Endothelial cell of umbilical vein (primary cell): ENCODE measurements at regions of chr9 and their contacts with region 1.

Region 1: DNA sequence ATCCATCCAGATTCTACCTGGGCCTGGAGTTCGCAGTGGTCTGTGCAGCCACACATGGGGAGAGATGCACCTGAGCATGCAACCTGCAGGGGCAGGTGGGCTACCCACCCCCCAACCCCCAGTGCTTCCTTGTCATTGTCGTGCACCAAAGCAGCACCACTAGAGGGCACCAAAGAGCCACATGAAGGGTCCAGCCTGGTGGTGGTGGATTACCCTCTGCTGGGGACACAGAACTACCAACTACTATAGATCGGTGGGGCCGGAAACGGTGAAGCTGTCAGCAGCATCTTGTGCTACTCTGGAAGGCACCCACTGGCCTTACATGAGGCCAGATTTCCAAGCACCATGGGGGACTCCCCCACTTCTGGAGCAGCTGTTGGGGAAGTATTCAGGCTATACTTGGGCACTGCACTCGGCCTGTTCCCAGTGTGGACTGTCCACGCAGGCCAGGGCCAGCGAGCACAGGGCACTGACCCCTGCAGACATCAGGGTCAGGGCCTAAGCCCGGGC is 60.2 kb upstream of the TBC1D2 start:
- DNase-seq: peak; percentile 82
- H3K4me3 ChIP-seq: no peak overlapping the region
- H3K27ac ChIP-seq: no peak overlapping the region
- H3K4me1 ChIP-seq: peaks cover 16% of the 10 kb centered on the region
- H3K27me3 ChIP-seq: no peaks in the 10 kb centered on the region
- CTCF ChIP-seq: peak; percentile 91 to 93
- POLR2A ChIP-seq: no peak

Region 2: DNA sequence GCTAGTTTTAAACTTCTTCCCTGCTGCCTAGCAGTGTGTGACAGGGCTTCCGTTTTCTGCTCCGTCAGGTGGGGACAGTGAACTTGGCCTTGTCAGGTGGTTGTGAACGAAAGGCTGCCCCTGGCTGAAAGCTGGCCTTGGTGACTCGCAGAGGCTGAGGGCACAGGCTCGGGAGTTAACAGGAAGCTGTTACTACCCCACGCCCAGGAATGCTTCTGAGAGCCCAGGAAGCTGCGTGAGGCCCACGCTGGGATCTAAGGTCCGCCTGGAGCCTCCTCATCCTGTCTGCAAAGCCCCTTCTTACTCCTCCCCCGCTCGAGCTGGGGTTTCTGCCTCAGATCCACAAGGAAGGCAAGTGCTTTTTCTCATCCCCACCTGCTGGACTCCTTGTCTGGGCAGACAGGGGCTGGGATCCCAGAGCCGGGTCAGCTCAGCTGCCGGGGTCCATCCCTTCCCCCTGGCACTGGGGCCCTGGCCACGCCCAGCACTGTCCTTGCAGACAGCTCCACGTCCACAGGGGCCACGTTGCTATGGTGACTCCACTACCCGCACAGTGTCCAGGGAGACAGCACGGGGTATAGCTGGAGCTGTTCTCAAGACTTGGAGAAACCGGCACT is 64.6 kb after region 1 on chr9:
- CTCF ChIA-PET with region 1: interaction called, 10 read pairs
- POLR2A ChIA-PET with region 1: no interaction called
- dilution Hi-C with region 1: no loop called
- intact Hi-C with region 1: no loop called
- DNase-seq: peak; percentile 8
- H3K4me3 ChIP-seq: no peak overlapping the region
- H3K27ac ChIP-seq: no peak overlapping the region
- H3K4me1 ChIP-seq: peaks cover 10% of the 10 kb centered on the region
- H3K27me3 ChIP-seq: no peaks in the 10 kb centered on the region
- CTCF ChIP-seq: no peak
- POLR2A ChIP-seq: no peak

Region 3: DNA sequence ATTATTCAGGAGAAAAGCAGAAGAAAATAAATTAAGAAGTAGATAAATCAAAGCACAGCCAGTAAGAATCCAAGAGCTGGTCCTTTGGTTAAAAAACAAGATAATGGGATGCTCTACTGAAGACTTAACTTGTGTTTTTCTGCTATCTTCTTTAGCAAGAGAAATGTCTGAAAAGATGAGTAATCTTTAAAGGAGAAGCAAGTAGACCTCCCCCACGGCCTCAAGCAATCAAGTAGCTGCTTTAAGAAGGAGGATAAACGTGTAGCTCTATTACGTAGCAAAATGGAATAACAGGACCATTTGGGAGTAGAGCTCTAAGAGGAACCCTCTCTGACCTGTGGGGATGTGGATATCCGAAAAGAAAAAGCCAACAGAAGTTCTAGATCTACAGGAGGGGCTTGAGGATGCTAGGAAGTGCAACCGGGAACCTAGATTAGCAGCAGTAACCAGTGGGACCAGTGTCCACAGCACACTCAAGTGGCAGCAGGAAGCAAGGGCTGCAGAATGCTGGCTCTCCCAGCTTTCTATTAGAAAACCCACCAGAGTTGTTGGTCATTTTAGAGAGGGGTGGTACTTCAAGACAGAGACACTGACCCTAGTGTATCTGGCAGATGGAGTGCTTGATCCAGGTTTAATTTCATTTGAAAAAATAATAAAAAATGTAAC is 207.8 kb after region 1 on chr9:
- CTCF ChIA-PET with region 1: interaction called, 40 read pairs
- POLR2A ChIA-PET with region 1: no interaction called
- dilution Hi-C with region 1: no loop called
- intact Hi-C with region 1: loop called (anchors 1 kb)
- DNase-seq: peak; percentile 30
- H3K4me3 ChIP-seq: no peak overlapping the region
- H3K27ac ChIP-seq: peak overlapping the region; percentile 60
- H3K4me1 ChIP-seq: peaks cover 34% of the 10 kb centered on the region
- H3K27me3 ChIP-seq: no peaks in the 10 kb centered on the region
- CTCF ChIP-seq: peak; percentile 17 to 45
- POLR2A ChIP-seq: no peak

Region 4: DNA sequence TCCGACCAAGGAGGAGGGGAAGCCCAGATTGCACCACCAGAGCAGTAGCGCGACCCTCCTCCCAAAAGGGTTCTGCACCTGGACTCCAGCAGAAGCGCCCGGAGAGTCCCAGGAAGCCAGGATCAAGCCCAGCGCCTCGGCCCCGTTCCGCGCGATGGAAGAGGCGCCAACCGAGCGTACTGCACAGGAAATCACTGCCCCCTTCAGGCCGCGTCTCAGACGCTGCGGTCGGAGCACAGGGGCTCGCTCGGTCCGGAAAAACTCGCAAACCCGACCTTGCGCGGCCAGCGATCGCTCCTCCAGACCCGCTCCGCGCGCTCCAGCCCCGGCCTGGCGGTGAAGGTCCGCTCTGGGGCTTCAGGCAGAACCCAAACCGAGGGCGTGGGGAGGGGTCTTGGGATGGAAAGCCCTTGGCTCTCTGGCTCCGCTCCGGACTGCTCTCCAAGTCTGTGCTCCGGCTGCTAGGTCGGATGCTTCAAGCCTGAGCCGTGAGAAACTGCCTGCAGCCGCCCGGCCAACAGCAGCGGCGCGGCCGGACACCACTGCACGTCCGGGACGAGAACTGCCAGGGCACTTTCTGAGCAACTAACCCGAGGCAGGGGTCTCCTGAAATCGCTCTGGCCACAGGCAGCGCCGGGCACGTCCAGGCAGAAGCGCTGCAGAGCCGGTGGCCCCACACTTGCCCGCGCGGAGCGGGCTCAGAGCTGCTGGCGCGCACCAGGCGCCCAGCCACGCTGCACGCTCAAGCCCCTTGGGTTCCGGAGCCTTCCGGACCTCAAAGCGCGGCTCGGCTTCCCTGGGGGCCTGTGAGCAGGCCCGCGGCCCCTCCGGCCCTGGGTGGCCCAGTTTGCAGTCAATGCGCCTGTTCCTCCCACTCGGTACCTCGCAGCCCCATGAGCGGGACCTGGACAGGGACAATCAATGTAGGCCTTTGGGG is 391.8 kb after region 1 on chr9:
- CTCF ChIA-PET with region 1: interaction called, 25 read pairs
- POLR2A ChIA-PET with region 1: no interaction called
- dilution Hi-C with region 1: no loop called
- intact Hi-C with region 1: loop called (anchors 1 kb)
- DNase-seq: peak; percentile 77
- H3K4me3 ChIP-seq: peak overlapping the region; percentile 28 to 82 (median 48)
- H3K27ac ChIP-seq: no peak overlapping the region
- H3K4me1 ChIP-seq: peaks cover 12% of the 10 kb centered on the region
- H3K27me3 ChIP-seq: peaks cover 2 to 11% of the 10 kb centered on the region in 2 experiments
- CTCF ChIP-seq: peak; percentile 72 to 84
- POLR2A ChIP-seq: no peak

Region 5: DNA sequence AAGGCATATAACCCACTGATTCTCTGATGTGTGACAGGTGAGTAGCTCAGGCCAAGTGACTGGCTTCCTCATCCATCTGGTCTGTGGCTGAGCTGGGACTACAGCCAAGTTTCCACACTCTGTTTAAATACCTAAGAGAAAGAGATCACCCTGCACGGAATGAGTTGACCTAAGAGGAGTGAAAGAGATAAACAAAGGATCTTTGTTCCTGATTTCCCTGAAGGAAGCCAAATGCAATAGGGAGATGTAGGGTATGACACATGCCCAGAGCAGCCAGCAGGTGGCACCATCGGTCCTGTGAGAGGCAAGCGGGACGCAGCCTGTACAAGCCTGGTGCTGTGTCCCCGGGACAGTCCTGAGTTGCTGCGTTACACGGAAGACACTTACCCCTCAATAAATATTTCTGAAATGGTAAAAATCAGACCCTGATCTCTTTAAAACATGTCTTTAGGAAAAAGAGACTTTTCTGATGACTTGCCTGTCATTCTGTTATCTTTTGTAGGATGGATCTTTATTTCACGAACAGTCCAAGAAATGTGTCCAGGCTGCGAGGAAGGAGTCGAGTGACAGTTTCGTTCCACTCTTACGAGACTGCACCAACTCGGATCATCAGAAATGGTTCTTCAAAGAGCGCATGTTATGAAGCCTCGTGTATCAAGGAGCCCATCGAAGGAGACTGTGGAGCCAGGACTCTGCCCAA is 533.0 kb after region 1 on chr9:
- CTCF ChIA-PET with region 1: no interaction called
- POLR2A ChIA-PET with region 1: no interaction called
- dilution Hi-C with region 1: no loop called
- intact Hi-C with region 1: loop called (anchors 5 kb)
- DNase-seq: peak; percentile 80
- H3K4me3 ChIP-seq: no peak overlapping the region
- H3K27ac ChIP-seq: no peak overlapping the region
- H3K4me1 ChIP-seq: no peaks in the 10 kb centered on the region
- H3K27me3 ChIP-seq: no peaks in the 10 kb centered on the region
- CTCF ChIP-seq: peak; percentile 93 to 94
- POLR2A ChIP-seq: no peak